Activated CD4-positive, alpha-beta memory T cell treated with anti-CD3 and anti-CD28 coated beads, Interleukin-2, amount 10 ng/mL, durations not matched to agents 7 days and 5 days (primary cell): ENCODE measurements at regions of chr5 and their contacts with region 1.

Region 1: DNA sequence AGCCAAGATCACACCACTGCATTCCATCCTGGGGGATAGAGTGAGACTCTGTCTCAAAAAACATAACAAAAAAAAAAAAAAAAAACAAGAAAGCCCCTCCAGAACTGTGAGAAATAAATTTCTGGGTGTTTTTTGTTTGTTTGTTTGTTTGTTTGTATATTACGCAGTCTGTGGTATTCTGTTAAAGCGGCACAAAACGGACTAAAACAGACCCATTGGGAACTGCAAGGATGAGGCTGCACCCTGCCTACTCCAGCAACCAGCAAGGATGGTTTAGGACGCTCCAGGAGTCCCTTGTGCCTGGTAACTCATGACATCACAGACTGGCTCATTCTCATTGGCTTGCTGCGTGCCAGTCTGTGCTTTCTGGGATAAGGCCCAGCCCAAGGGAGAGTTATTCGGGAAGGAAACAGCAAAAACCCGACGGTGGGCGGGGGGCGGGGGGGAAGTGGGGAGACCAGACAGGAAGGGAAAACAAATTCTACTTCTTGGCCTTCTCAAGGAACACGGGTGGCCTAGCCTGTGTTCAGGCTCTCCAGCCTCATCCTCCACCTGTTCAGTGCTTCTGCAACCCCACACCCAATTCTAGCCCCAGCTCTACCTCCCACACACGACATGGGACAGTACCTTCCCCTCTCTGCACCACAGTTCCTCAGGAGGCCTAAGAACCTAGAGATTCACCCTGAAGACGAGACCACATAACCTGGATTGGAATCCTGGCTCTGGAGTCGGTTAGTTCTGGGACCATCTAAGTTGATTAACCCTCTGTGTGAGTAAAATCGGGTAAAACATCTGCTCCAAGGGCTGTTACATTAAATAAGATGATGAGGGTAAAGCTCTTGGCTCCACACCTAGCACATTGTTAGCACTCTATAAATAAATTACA is 2.8 kb downstream of the CD74 start:
- DNase-seq: peak; percentile 73
- H3K4me3 Mint-ChIP-seq: peak overlapping the region; percentile 94
- H3K27ac Mint-ChIP-seq: peak overlapping the region; percentile 97
- H3K4me1 Mint-ChIP-seq: peaks cover 41% of the 10 kb centered on the region
- H3K27me3 Mint-ChIP-seq: no peaks in the 10 kb centered on the region

Region 2: GRCh38 chr5:150357326-150358260 is 52.3 kb before region 1 on chr5 and contains the start of gene TCOF1:
- CTCF ChIA-PET with region 1: no interaction called
- POLR2A ChIA-PET with region 1: interaction called, 27 read pairs
- DNase-seq: peak; percentile 98
- H3K4me3 Mint-ChIP-seq: peak within 1 kb of the TSS; percentile 89
- H3K27ac Mint-ChIP-seq: peak within 1 kb of the TSS; percentile 83
- H3K4me1 Mint-ChIP-seq: peaks cover 43% of the 10 kb centered on the region
- H3K27me3 Mint-ChIP-seq: peaks cover 8% of the 10 kb centered on the region
- total RNA-seq, gene TCOF1: 52.8 to 53.0 TPM

Region 3: GRCh38 chr5:150398722-150399523 is 11.0 kb before region 1 on chr5:
- CTCF ChIA-PET with region 1: interaction called, 7 read pairs
- POLR2A ChIA-PET with region 1: interaction called, 74 read pairs
- DNase-seq: no peak
- H3K4me3 Mint-ChIP-seq: no peak overlapping the region
- H3K27ac Mint-ChIP-seq: peak overlapping the region; percentile 32
- H3K4me1 Mint-ChIP-seq: no peaks in the 10 kb centered on the region
- H3K27me3 Mint-ChIP-seq: no peaks in the 10 kb centered on the region

Region 4: GRCh38 chr5:150422075-150422474 is 12.2 kb after region 1 on chr5:
- CTCF ChIA-PET with region 1: interaction called, 5 read pairs
- POLR2A ChIA-PET with region 1: interaction called, 18 read pairs
- DNase-seq: no peak
- H3K4me3 Mint-ChIP-seq: no peak overlapping the region
- H3K27ac Mint-ChIP-seq: no peak overlapping the region
- H3K4me1 Mint-ChIP-seq: peaks cover 5% of the 10 kb centered on the region
- H3K27me3 Mint-ChIP-seq: peaks cover 6% of the 10 kb centered on the region

Region 5: DNA sequence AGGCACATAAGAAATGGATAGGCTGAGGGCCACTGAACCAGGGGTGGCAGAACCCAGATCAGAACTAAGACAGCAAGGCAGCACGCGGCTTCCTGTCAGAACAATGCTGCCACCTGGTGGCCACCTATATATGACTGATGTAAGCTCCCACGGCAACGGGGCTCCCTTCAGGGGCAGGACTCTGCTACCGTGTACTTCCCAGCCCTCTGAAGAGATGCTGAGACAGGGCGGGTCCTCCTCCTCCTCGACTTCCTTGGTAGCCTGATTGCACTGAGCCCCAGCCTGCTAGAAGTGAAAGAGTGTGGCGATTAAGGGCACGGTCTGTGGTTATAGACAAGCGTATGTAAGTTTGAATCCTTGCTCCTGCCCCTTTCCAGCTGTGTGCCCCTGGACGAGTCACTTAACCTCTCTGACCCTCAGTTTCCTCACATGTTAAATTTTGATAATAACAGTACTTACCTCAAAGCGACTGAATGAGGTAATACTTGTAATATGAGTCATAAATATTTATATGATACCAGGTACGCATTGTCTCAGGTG is 26.3 kb after region 1 on chr5:
- CTCF ChIA-PET with region 1: interaction called, 14 read pairs
- POLR2A ChIA-PET with region 1: interaction called, 8 read pairs
- DNase-seq: peak; percentile 91
- H3K4me3 Mint-ChIP-seq: peak overlapping the region; percentile 49
- H3K27ac Mint-ChIP-seq: peak overlapping the region; percentile 45
- H3K4me1 Mint-ChIP-seq: peaks cover 11% of the 10 kb centered on the region
- H3K27me3 Mint-ChIP-seq: no peaks in the 10 kb centered on the region

Region 6: GRCh38 chr5:150443242-150444075 is 33.6 kb after region 1 on chr5:
- CTCF ChIA-PET with region 1: no interaction called
- POLR2A ChIA-PET with region 1: interaction called, 32 read pairs
- DNase-seq: no peak
- H3K4me3 Mint-ChIP-seq: no peak overlapping the region
- H3K27ac Mint-ChIP-seq: no peak overlapping the region
- H3K4me1 Mint-ChIP-seq: peaks cover 29% of the 10 kb centered on the region
- H3K27me3 Mint-ChIP-seq: no peaks in the 10 kb centered on the region

Region 7: DNA sequence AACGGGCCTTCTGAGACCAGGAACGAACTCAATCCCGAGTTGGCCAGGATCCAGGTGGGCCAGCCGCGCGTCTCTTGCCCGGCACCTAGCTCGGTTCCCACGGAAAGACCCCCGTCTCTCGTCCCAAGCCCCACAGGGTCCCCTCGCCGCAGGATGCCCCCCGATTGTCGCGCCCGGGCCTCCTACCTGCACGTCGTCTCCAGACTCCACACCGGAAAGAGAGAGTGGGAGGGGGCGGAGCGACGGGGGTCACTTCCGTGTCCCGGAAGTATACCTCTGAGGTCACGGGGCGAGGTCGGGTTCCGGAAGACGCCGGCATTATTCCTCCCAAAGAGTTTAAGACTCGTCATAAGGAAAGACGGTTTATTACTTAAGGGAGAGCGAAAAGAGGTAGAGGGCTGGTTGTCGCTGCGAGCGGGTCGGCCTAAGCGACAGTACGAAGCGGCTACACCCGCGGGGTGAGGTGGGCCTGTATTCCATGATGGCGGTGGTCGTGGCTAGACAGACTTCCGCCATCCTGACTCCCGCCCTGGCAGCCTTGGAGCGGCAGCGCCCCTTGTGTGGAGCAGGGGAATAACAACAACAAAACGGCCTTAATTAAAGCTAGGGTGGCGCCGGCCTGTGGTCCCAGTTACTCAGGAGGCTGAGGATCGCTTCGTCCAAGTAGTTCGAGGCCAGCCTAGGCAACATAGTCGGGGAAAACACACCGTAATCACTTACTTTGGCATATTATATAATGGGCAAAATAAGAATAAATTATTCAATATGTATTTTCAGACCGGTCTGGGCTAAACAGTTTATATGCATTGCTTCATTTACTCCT is 39.8 kb after region 1 on chr5 and contains the start of gene RPS14:
- CTCF ChIA-PET with region 1: interaction called, 5 read pairs
- POLR2A ChIA-PET with region 1: interaction called, 37 read pairs
- DNase-seq: peak; percentile 95
- H3K4me3 Mint-ChIP-seq: peak within 1 kb of the TSS; percentile 82
- H3K27ac Mint-ChIP-seq: peak within 1 kb of the TSS; percentile 92
- H3K4me1 Mint-ChIP-seq: peaks cover 34% of the 10 kb centered on the region
- H3K27me3 Mint-ChIP-seq: no peaks in the 10 kb centered on the region
- total RNA-seq, gene RPS14: 2,316 to 2,367 TPM

Region 8: DNA sequence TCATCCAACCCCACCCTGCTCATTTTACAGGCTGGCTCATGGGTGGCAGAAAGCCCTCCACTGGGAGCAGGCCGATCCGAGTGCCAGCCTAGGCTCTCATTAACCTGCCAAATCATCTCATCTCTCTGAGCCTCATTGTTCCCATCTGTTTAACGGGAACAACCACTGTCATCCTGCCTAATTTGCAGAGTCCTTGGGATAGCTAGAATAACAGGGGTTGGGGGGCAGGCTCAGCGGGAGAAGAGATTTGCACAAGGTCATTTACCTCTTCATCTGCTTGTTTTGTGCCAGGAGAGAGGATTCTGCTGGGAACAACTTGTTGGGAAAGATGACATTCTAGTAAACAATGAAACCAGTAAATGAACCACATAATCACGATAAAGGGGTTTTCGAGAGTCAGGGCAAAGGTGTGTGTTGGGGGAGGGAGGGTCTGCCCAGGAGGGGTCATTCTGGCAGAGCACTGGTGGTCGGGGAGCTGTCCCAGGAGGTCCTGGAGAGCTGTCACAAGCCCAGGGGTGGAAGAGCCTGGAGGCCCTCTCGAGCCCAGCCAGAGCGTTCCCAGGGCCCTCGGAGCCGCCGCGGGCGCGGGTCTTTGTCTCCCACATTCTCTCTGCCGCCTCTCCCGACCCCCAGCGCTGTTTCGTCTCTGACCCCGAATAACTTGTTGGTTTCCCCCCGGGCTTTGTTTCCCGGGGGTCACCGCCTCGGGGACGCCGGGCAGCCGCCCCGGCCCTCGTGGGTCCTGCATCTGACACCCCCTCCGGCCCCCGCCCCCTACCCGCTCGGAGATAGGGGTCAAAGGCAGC is 75.3 kb after region 1 on chr5:
- CTCF ChIA-PET with region 1: no interaction called
- POLR2A ChIA-PET with region 1: no interaction called
- DNase-seq: no peak
- H3K4me3 Mint-ChIP-seq: peak overlapping the region; percentile 52
- H3K27ac Mint-ChIP-seq: no peak overlapping the region
- H3K4me1 Mint-ChIP-seq: peaks cover 8% of the 10 kb centered on the region
- H3K27me3 Mint-ChIP-seq: peaks cover 24% of the 10 kb centered on the region